Activated T-helper 1 cell treated with anti-CD3 and anti-CD28 coated beads, Interleukin-12 subunit alpha, Interleukin-12 subunit beta, Interleukin-2, Interleukin-4 antibody, amounts not matched to agents 30 ng/mL and 10 ng/mL and 1 ng/mL, durations not matched to agents 14 hours and 24 hours and 36 hours (primary cell): ENCODE measurements at regions of chr14 and their contacts with region 1.

Region 1: DNA sequence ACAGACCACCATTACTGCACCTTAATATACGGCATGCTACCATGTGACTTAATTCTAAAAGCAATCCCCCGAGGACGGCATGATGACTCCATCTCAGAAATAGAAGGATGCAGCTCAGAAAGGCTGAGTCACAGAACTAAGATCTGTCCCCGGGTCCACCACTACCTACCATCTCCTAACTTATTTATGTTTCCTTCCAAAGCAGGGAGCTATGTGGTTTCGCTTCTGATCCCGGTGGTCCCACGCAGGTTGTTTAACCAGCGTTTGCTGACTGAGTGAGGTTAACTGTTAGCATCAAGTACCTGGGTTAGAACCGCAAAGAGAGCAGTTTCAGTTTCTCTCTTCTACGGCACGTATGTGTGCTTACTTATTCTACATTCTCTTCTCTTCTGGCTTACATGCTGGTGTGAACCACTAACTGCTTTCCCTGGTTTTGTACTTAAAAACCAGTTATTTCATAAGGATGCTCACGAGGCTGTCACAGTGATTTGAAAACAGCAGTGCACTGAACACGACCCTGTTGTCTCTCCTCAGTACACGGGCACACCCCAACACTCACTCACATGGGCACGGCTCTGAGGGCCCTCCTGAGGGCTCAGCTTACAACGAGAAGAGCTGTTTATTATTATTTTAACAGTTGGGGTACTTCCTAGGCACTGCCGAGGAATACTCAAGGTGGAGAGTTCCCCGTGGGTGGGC is 66.7 kb downstream of the CCDC88C start:
- DNase-seq: peak; percentile 72
- H3K4me3 Mint-ChIP-seq: peak overlapping the region; percentile 74
- H3K27ac Mint-ChIP-seq: peak overlapping the region; percentile 94
- H3K4me1 Mint-ChIP-seq: peaks cover 89% of the 10 kb centered on the region
- H3K27me3 Mint-ChIP-seq: no peaks in the 10 kb centered on the region

Region 2: DNA sequence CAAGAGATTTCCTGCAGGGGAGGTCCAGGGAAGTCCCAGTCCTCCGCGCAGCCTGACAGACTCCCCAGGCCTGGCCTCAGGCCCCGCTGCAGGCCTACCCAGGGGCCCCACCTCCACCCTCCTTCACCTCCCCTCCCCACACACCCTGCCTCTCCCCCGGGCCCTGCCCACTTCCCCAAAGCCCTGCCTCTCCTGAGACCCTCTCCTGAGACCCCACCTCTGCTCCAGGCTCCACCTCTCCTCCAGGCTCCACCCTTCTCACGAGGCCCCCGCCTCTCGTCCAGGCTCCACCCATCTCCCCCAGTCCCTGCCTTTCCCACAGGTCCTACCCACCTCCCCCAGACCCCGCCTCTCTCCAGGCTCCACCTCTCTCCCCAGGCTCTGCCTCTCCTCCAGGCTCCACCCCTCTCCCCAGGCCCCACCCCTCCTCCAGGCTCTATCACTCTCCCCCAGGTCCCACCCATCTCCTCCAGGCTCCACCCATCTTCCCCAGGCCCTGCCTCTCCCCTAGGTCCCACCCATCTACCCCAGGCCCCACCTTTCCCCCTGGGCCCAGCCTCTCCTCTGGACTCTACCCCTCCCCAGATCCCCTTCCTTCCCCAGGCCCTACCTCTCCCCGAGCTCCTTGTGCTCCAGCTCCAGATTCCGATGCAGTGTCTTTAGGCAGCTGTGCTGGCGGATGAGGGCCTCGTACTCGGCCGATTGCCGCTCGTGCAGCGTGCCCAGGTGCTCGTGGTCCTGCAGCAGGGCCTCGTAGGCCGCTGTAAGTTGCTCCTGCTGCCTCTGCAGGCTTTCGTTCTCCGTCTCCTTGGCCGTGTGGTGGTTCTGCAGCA is 47.7 kb before region 1 on chr14:
- intact Hi-C with region 1: loop called (anchors 1 kb)
- DNase-seq: peak; percentile 36
- H3K4me3 Mint-ChIP-seq: peak overlapping the region; percentile 63
- H3K27ac Mint-ChIP-seq: peak overlapping the region; percentile 98
- H3K4me1 Mint-ChIP-seq: peaks cover 72% of the 10 kb centered on the region
- H3K27me3 Mint-ChIP-seq: no peaks in the 10 kb centered on the region

Region 3: GRCh38 chr14:91323671-91324605 is 27.0 kb before region 1 on chr14:
- intact Hi-C with region 1: loop called (anchors 1 kb)
- DNase-seq: peak; percentile 84
- H3K4me3 Mint-ChIP-seq: peak overlapping the region; percentile 80
- H3K27ac Mint-ChIP-seq: peak overlapping the region; percentile 99
- H3K4me1 Mint-ChIP-seq: peaks cover 59% of the 10 kb centered on the region
- H3K27me3 Mint-ChIP-seq: no peaks in the 10 kb centered on the region

Region 4: DNA sequence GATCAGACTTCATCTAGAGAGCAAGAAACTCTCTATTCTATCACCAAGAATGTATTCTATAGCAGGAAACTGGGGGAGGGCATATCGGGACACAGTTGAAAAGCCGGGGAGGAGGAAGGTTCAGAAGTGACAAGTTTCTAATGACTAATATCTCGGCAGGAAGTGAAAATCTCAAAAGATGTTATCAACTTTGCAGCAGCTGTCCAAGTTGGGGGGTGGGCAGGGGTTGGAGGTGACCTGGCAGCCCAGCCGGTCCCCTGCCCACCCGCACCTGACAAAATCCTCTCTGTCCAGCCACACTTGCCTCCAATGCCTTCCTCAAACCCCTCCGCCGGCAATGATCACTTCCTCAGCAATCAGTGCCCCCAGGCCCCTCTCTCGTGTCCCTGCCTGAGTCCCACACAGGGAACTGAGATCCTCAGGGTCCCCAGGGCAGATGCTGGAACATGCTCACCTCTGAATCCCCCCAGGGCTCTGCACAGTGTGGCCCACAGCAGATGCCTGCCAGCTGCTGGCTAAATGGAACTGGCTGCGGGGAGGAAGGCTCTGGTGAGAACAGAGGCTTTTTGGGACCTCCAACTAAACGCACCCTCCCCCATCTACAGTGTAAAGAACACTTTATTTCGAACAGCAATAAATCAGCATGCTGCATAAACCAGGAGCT is 22.8 kb after region 1 on chr14:
- intact Hi-C with region 1: loop called (anchors 1 kb)
- DNase-seq: peak; percentile 50
- H3K4me3 Mint-ChIP-seq: peak overlapping the region; percentile 75
- H3K27ac Mint-ChIP-seq: peak overlapping the region; percentile 94
- H3K4me1 Mint-ChIP-seq: peaks cover 91% of the 10 kb centered on the region
- H3K27me3 Mint-ChIP-seq: no peaks in the 10 kb centered on the region

Region 5: GRCh38 chr14:91410771-91411536 is 60.0 kb after region 1 on chr14:
- intact Hi-C with region 1: loop called (anchors 1 kb)
- DNase-seq: no peak
- H3K4me3 Mint-ChIP-seq: peak overlapping the region; percentile 72
- H3K27ac Mint-ChIP-seq: peak overlapping the region; percentile 96
- H3K4me1 Mint-ChIP-seq: peaks cover 89% of the 10 kb centered on the region
- H3K27me3 Mint-ChIP-seq: no peaks in the 10 kb centered on the region